ENCODE measurements at regions of chr6 and their contacts with region 1.

Region 1: GRCh38 chr6:44265007-44265721 is at the start of gene NFKBIE:
- DNase-seq: peak; percentile 97 to 99
- ATAC-seq: peak; percentile 93
- H3K4me3 ChIP-seq: peak within 1 kb of the TSS; percentile 20 to 74
- H3K27ac ChIP-seq: peak within 1 kb of the TSS in 1 of 2 donors; percentile 1
- H3K4me1 ChIP-seq: peaks cover 0 to 4% of the 10 kb centered on the region in 2 donors
- H3K27me3 ChIP-seq: no peaks in the 10 kb centered on the region
- total RNA-seq, gene NFKBIE: 5.4 to 10.9 TPM

Region 2: GRCh38 chr6:44304282-44305199 is 39.4 kb after region 1 on chr6:
- intact Hi-C with region 1: loop called (anchors 5 kb)
- DNase-seq: peak in 1 of 2 donors; percentile 75
- ATAC-seq: no peak
- H3K4me3 ChIP-seq: no peak overlapping the region
- H3K27ac ChIP-seq: no peak overlapping the region
- H3K4me1 ChIP-seq: no peaks in the 10 kb centered on the region
- H3K27me3 ChIP-seq: no peaks in the 10 kb centered on the region